Endothelial cell of umbilical vein (primary cell): ENCODE measurements at regions of chr18 and their contacts with region 1.

Region 1: DNA sequence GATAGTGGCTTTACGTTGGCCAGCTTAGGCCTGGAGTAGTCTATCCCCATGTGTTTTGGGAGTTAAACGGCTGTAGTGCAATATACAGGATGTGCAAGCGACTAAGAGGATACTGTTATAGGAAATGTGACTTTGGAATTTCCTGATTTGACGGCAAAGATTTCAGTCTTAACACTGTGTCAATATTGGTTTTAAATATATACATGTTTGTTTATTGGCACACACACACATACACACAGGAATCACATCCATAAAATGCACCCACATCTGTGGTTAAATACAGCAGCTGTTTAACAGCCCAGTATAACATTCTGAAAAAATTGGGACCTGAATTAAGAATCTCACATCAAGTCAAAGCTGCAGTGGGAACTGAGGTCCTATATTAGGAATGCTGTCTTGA is 347.1 kb downstream of the TXNL1 start:
- DNase-seq: peak; percentile 83
- H3K4me3 ChIP-seq: no peak overlapping the region
- H3K27ac ChIP-seq: peak overlapping the region; percentile 46
- H3K4me1 ChIP-seq: peaks cover 24% of the 10 kb centered on the region
- H3K27me3 ChIP-seq: no peaks in the 10 kb centered on the region
- CTCF ChIP-seq: no peak
- POLR2A ChIP-seq: no peak

Region 2: DNA sequence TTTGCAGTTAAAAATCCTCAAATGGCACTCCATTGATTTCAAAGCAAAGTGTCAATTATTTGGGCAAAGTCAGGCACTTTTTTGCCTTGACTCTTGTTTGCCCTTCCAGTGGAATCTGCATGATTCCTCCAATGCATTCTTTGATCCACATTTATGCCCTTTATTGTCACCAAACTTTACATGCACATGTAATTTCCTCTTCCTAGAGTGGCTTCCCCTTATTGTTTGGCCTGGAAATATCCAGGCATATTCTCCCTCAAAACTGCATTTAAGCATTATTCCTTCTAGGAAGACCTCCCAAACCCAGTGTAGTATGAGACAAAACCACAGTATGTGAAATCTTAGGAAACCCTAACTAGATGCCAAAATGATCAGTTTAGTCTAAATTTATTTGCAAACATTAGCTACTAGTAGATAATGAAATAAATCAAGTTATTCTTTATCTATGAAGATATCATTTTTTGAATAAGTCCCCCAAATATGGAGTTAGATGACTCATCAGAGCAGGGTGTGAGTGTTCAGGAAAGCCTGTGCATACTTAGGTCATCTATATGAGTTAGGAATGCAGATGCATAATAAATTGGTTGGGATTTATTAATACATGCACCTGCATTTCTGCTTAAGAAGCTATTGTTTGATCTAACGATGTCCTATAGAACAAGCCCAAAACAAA is 270.0 kb before region 1 on chr18:
- CTCF ChIA-PET with region 1: no interaction called
- POLR2A ChIA-PET with region 1: no interaction called
- dilution Hi-C with region 1: no loop called
- intact Hi-C with region 1: loop called (anchors 1 kb)
- DNase-seq: peak; percentile 86
- H3K4me3 ChIP-seq: peak overlapping the region in 1 of 3 experiments; percentile 3
- H3K27ac ChIP-seq: peak overlapping the region; percentile 93
- H3K4me1 ChIP-seq: peaks cover 35% of the 10 kb centered on the region
- H3K27me3 ChIP-seq: no peaks in the 10 kb centered on the region
- CTCF ChIP-seq: no peak
- POLR2A ChIP-seq: no peak

Region 3: GRCh38 chr18:56168049-56168781 is 123.1 kb before region 1 on chr18:
- CTCF ChIA-PET with region 1: no interaction called
- POLR2A ChIA-PET with region 1: no interaction called
- dilution Hi-C with region 1: no loop called
- intact Hi-C with region 1: no loop called
- DNase-seq: peak; percentile 54
- H3K4me3 ChIP-seq: no peak overlapping the region
- H3K27ac ChIP-seq: no peak overlapping the region
- H3K4me1 ChIP-seq: peaks cover 7% of the 10 kb centered on the region
- H3K27me3 ChIP-seq: no peaks in the 10 kb centered on the region
- CTCF ChIP-seq: no peak
- POLR2A ChIP-seq: no peak

Region 4: DNA sequence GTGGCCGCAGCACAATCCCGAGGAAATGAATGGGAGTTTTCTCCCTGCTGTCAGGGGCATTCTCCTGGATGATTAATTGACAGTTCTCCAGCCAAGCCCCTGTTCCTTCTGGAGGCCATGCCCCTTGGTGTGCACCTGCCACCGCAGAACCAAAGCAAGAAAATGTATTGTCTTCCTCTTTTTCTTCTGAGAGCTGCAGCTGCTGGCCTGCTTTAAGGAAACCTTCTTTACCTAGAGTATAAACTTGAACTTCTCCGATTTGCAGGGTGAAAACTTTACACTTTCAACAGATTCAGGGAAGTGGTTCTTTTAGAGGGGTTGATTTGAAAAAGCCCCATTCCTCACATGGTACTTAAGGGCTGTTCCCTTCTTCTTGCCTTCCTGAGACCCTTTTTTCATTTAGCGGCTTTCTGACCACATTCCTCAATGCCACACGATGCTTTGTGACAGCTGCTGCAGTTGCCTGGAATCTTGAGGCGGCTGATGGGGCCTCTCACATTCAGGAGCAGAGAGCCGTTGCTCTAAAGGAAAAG is 55.7 kb before region 1 on chr18:
- CTCF ChIA-PET with region 1: no interaction called
- POLR2A ChIA-PET with region 1: no interaction called
- dilution Hi-C with region 1: no loop called
- intact Hi-C with region 1: no loop called
- DNase-seq: peak; percentile 43
- H3K4me3 ChIP-seq: no peak overlapping the region
- H3K27ac ChIP-seq: no peak overlapping the region
- H3K4me1 ChIP-seq: no peaks in the 10 kb centered on the region
- H3K27me3 ChIP-seq: no peaks in the 10 kb centered on the region
- CTCF ChIP-seq: no peak
- POLR2A ChIP-seq: no peak

Region 5: DNA sequence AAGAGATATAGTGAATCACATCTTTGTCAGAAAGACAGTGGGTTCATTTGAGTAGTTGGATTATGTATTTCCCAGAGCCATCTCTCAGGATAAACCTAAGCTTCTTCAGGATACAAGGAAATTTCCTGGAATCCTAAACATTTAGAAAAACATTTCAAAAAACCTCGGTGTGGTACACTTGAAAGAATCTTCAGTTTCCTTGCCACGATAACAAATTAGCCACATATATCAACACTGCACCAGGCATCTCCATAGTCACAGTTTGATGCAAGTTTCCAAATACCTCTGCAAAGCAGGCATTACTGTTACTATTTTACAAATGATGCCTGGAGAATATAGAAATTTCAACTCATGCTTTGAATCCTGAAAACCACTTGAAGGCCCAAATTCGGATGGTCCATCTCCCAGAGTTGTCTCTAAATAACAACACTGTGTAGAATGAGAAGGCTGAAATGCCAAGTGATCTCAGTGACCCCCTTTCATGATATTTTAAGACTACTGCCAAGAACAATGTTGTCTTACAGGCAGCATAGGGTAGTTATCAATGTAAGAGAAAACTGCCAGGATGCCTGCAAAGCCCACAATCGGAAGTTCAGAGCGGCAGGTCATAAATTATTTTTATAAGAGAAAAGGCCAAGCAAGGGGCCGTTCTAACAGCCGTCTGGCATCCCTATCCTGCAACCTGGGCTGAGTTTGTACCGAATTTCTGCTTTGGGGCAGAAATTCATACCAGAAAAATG is 39.2 kb after region 1 on chr18:
- CTCF ChIA-PET with region 1: no interaction called
- POLR2A ChIA-PET with region 1: no interaction called
- dilution Hi-C with region 1: no loop called
- intact Hi-C with region 1: loop called (anchors 2 kb)
- DNase-seq: peak; percentile 93
- H3K4me3 ChIP-seq: no peak overlapping the region
- H3K27ac ChIP-seq: no peak overlapping the region
- H3K4me1 ChIP-seq: peaks cover 17% of the 10 kb centered on the region
- H3K27me3 ChIP-seq: no peaks in the 10 kb centered on the region
- CTCF ChIP-seq: no peak
- POLR2A ChIP-seq: no peak

Region 6: GRCh38 chr18:56565551-56566345 is 274.5 kb after region 1 on chr18:
- CTCF ChIA-PET with region 1: no interaction called
- POLR2A ChIA-PET with region 1: no interaction called
- dilution Hi-C with region 1: no loop called
- intact Hi-C with region 1: loop called (anchors 1 kb)
- DNase-seq: peak; percentile 45
- H3K4me3 ChIP-seq: no peak overlapping the region
- H3K27ac ChIP-seq: no peak overlapping the region
- H3K4me1 ChIP-seq: no peaks in the 10 kb centered on the region
- H3K27me3 ChIP-seq: peaks cover 0 to 3% of the 10 kb centered on the region in 2 experiments
- CTCF ChIP-seq: no peak
- POLR2A ChIP-seq: no peak